Prostate gland (tissue), 2 donors: ENCODE measurements at regions of chr1 and their contacts with region 1.

Region 1: DNA sequence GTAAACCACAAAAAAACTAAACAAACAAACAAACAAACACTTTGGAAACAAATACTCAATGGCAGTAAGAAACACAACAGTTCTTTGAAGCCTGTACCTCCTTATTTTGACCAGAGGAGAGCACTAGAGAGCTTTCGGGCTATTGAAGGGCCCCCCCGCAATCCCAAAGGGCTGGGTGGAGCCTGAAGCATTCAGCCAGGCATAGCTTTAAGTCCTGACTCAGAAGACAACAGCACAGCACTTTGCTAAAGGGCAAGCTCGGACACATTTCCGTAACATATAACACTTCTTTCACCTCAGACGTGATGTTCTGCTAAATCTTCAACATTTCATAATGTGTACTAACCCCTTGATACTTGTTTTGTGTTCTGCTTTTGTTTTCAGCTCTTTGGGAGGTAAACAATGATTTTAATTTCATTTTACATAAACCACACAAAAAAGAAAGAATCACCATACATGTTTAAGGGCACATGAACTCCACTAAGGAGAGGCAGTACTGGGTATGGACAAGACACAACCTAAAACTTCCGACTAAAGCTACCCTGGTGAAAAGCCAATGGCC is 9.7 kb upstream of the SHCBP1L start:
- DNase-seq: peak; percentile 81
- H3K4me3 ChIP-seq: no peak overlapping the region
- H3K27ac ChIP-seq: peak overlapping the region in 1 of 2 donors; percentile 51
- H3K4me1 ChIP-seq: no peaks in the 10 kb centered on the region
- H3K27me3 ChIP-seq: no peaks in the 10 kb centered on the region
- CTCF ChIP-seq: peak; percentile 51 to 95 (median 88)
- POLR2A ChIP-seq: peak; percentile 66

Region 2: DNA sequence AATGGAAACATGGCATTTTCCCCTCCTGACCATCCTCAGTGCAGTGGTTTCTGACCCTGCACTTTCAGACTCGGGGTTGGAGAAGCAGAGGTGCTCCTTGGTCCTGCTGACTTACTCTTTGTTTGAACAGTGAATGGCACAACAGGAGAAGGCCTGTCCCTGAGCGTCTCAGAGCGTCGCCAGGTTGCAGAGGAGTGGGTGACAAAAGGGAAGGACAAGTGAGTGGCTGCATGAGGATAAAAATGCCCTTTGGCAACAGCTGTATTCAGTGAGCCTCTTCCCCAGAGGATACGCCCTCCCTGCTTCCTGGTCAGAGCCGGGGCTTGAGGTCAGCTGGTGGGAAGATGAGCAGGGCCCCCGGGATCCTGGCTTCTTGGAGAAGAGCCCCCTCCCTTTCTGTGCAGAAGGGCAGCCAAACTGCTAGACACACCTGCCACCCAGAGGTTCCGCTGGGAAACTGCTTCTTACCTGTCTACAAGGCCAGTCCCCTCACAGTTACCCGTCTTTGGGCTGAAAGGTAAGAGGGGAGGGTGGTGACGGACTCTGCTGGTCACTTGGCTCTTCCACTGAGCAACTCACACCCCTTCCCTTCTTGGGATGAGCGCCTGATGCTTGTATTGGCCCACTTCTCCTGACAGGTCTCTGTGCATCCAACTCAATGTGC is 156.5 kb before region 1 on chr1:
- intact Hi-C with region 1: no loop called
- DNase-seq: no peak
- H3K4me3 ChIP-seq: no peak overlapping the region
- H3K27ac ChIP-seq: no peak overlapping the region
- H3K4me1 ChIP-seq: no peaks in the 10 kb centered on the region
- H3K27me3 ChIP-seq: no peaks in the 10 kb centered on the region
- CTCF ChIP-seq: no peak
- POLR2A ChIP-seq: no peak

Region 3: DNA sequence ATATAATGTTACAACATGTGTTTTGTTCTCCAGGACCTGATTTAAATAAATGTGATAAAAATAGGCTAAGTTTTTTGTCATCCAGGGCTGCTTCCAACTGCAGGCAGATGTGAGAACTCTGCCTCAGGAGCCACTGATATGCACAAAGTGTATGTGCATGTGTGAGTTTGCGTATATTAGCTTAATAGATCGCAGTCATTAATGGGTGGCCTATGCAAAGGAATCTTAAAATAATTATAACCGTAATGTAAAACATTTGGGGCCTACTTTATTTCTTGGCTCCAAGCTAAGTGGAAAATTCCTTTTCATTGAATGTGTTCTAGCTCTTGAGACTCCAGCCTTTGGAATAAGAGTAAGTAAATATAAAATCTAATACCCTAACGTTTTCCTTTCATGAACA is 106.7 kb before region 1 on chr1:
- intact Hi-C with region 1: no loop called
- DNase-seq: no peak
- H3K4me3 ChIP-seq: no peak overlapping the region
- H3K27ac ChIP-seq: no peak overlapping the region
- H3K4me1 ChIP-seq: no peaks in the 10 kb centered on the region
- H3K27me3 ChIP-seq: no peaks in the 10 kb centered on the region
- CTCF ChIP-seq: no peak
- POLR2A ChIP-seq: no peak

Region 4: DNA sequence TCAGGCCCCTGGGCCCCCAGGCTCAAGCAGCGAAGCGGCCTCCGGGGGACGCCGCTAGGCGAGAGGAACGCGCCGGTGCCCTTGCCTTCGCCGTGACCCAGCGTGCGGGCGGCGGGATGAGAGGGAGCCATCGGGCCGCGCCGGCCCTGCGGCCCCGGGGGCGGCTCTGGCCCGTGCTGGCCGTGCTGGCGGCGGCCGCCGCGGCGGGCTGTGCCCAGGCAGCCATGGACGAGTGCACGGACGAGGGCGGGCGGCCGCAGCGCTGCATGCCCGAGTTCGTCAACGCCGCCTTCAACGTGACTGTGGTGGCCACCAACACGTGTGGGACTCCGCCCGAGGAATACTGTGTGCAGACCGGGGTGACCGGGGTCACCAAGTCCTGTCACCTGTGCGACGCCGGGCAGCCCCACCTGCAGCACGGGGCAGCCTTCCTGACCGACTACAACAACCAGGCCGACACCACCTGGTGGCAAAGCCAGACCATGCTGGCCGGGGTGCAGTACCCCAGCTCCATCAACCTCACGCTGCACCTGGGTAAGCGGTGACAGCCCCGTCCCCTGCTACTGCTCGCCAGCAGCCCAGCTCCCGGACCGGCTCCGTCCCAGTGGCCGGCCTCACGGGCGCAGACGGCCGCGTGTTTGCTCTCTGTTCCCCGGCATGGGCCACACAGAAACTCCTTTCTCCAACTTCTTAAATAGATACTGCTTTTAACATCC is 61.1 kb after region 1 on chr1:
- intact Hi-C with region 1: loop called (anchors 5 kb)
- DNase-seq: peak; percentile 86
- H3K4me3 ChIP-seq: peak overlapping the region; percentile 84
- H3K27ac ChIP-seq: peak overlapping the region; percentile 98 to 100
- H3K4me1 ChIP-seq: no peaks in the 10 kb centered on the region
- H3K27me3 ChIP-seq: no peaks in the 10 kb centered on the region
- CTCF ChIP-seq: peak in 3 of 4 experiments; percentile 57 to 71 (median 67)
- POLR2A ChIP-seq: peak; percentile 68

Region 5: GRCh38 chr1:183185941-183186490 is 223.4 kb after region 1 on chr1 and contains the start of gene LAMC2:
- intact Hi-C with region 1: loop called (anchors 5 kb)
- DNase-seq: peak; percentile 75
- H3K4me3 ChIP-seq: peak within 1 kb of the TSS; percentile 8 to 33
- H3K27ac ChIP-seq: peak within 1 kb of the TSS; percentile 66 to 71
- H3K4me1 ChIP-seq: no peaks in the 10 kb centered on the region
- H3K27me3 ChIP-seq: no peaks in the 10 kb centered on the region
- CTCF ChIP-seq: peak in 3 of 4 experiments; percentile 41 to 61 (median 57)
- POLR2A ChIP-seq: peak; percentile 69
- total RNA-seq, gene LAMC2: 9.3 to 11.6 TPM

Region 6: DNA sequence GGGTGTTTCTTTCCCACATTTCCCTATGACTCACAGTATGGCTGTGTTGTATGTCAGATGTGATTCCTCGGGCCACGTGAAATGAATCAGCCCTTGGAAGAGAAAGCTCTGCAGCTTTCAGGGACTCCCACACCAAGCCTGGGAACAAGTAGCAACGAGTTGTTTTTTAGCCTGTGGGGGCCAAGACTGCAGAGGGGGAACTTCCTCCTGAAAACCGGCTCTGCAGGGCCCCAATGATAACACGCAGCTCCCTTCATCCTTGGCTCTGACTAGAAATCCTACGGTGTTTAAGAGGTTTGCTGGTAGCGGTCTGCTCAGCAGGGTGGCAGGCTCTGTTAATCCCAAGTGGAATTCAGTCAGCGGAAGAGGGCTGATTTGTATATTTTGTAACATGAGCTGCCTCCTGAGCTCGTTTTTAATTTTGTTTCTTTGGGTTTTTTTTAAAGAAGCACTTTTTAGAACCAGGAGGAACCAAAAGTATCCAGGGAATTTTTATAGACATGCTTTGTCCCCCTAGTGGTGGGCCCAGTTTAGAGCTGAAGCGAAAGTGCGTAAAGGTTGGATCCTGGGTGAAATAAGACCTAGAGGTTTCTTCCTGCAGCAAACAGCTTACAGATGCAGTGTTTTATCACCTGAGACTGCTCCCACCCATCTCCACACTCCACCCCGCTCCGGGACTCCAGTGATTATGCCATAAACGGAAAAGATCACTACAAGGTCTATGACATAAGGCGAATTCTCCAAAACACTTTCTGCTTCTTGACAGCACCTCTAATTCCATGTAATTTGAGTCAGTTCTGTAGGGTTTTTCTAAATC is 272.2 kb after region 1 on chr1:
- intact Hi-C with region 1: loop called (anchors 5 kb)
- DNase-seq: peak; percentile 83
- H3K4me3 ChIP-seq: peak overlapping the region; percentile 14 to 24
- H3K27ac ChIP-seq: peak overlapping the region; percentile 68 to 80
- H3K4me1 ChIP-seq: peaks cover 3% of the 10 kb centered on the region
- H3K27me3 ChIP-seq: no peaks in the 10 kb centered on the region
- CTCF ChIP-seq: peak in 3 of 4 experiments; percentile 65 to 72 (median 67)
- POLR2A ChIP-seq: peak; percentile 12

Region 7: DNA sequence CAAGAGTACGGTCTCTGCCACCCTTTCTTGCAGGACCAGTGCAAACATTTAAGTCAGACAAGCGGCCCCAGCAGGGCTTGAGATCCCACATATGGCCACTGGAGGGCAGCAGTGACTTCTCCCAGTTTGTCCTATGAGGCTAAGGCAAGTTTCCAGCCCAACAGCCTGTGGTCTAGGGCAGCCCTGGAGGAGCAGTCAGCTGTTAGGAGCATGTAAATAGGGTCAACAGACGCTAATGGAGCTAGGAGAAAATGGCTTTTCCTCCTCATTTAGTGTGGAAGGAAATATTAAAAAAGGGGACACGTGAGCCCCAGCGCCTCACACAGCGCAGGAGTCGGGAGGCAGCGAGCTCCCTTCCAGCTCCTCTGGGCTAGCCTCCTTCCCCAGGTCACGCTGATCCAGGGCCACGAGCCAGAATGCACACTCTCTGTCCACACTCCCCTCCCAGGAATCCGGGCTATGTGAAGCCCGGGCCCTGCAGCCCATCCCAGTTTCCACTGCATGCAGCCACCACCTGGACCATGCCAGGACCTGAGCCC is 319.0 kb after region 1 on chr1:
- intact Hi-C with region 1: loop called (anchors 1 kb)
- DNase-seq: peak; percentile 86
- H3K4me3 ChIP-seq: no peak overlapping the region
- H3K27ac ChIP-seq: peak overlapping the region; percentile 10 to 39
- H3K4me1 ChIP-seq: no peaks in the 10 kb centered on the region
- H3K27me3 ChIP-seq: no peaks in the 10 kb centered on the region
- CTCF ChIP-seq: peak; percentile 67 to 92 (median 88)
- POLR2A ChIP-seq: no peak

Region 8: GRCh38 chr1:183318433-183318832 is 355.8 kb after region 1 on chr1:
- intact Hi-C with region 1: loop called (anchors 5 kb)
- DNase-seq: peak; percentile 61
- H3K4me3 ChIP-seq: no peak overlapping the region
- H3K27ac ChIP-seq: peak overlapping the region in 1 of 2 donors; percentile 26
- H3K4me1 ChIP-seq: no peaks in the 10 kb centered on the region
- H3K27me3 ChIP-seq: no peaks in the 10 kb centered on the region
- CTCF ChIP-seq: peak in 2 of 4 experiments; percentile 61 to 64
- POLR2A ChIP-seq: no peak

Region 9: DNA sequence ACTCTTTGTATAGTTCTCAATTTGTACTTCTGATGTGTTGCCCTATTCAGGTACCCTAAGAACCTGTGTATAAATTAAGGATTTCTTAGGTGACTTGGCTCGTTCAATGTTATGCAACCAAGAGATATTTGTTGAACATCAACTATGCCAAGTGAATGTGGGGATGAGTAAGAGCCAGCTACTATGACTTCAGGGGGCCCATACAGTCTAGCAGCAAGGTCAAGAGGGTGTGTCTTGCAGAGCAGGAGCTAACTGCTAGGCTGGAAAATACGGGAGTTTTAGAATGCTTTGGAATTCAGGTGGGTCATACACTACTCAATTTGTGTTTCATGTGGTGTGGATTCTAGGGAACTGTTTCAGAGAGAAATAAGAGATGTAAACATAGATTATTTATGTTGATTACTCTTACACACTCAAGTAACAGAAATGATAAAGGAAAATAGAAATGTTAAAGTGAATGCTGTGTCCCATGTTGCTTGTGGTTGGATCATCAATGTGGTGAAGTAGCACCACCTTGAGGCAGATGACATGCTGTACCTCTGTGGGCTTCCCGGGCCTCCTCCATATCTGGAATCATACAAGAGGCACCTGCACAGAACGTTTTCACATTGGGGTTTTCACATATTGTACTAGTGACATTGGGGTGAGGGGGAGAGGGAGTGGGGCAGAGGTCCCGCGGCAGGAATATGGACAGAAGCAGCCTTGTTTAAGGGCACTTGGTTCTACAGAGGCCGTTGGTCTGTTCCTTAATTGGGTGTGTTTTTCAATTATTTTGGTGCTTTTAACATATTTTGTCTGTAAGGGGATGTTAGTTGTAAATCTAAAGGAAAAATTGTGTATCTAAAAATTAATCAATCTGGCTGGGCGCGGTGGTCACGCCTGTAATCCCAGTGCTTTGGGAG is 660.5 kb after region 1 on chr1:
- intact Hi-C with region 1: loop called (anchors 10 kb)
- DNase-seq: peak; percentile 39
- H3K4me3 ChIP-seq: no peak overlapping the region
- H3K27ac ChIP-seq: no peak overlapping the region
- H3K4me1 ChIP-seq: peaks cover 5% of the 10 kb centered on the region
- H3K27me3 ChIP-seq: no peaks in the 10 kb centered on the region
- CTCF ChIP-seq: peak; percentile 13 to 58 (median 38)
- POLR2A ChIP-seq: no peak